ENCODE measurements at regions of chr4 and their contacts with region 1.

Region 1: GRCh38 chr4:97116511-97116910 is 1026.8 kb downstream of the STPG2 start:
- DNase-seq: no peak
- ATAC-seq: no peak
- H3K4me3 ChIP-seq: no peak overlapping the region
- H3K27ac ChIP-seq: no peak overlapping the region
- H3K4me1 ChIP-seq: no peaks in the 10 kb centered on the region
- H3K27me3 ChIP-seq: no peaks in the 10 kb centered on the region
- CTCF ChIP-seq: no peak

Region 2: GRCh38 chr4:97330917-97331316 is 214.4 kb after region 1 on chr4:
- intact Hi-C with region 1: loop called in 1 of 3 experiments (anchors 5 kb)
- DNase-seq: no peak
- ATAC-seq: no peak
- H3K4me3 ChIP-seq: no peak overlapping the region
- H3K27ac ChIP-seq: no peak overlapping the region
- H3K4me1 ChIP-seq: no peaks in the 10 kb centered on the region
- H3K27me3 ChIP-seq: no peaks in the 10 kb centered on the region
- CTCF ChIP-seq: no peak

Region 3: GRCh38 chr4:97432551-97432950 is 316.0 kb after region 1 on chr4:
- intact Hi-C with region 1: no loop called
- DNase-seq: no peak
- ATAC-seq: no peak
- H3K4me3 ChIP-seq: no peak overlapping the region
- H3K27ac ChIP-seq: no peak overlapping the region
- H3K4me1 ChIP-seq: no peaks in the 10 kb centered on the region
- H3K27me3 ChIP-seq: no peaks in the 10 kb centered on the region
- CTCF ChIP-seq: no peak